Activated CD8-positive, alpha-beta T cell treated with anti-CD3 and anti-CD28 coated beads for 36 hours (primary cell): ENCODE measurements at regions of chr17 and their contacts with region 1.

Region 1: GRCh38 chr17:9432134-9432885 is 143.3 kb downstream of the STX8 start:
- DNase-seq: no peak
- ATAC-seq: no peak
- H3K4me3 Mint-ChIP-seq: no peak overlapping the region
- H3K27ac Mint-ChIP-seq: no peak overlapping the region
- H3K4me1 Mint-ChIP-seq: peaks cover 12% of the 10 kb centered on the region
- H3K27me3 Mint-ChIP-seq: no peaks in the 10 kb centered on the region
- CTCF ChIP-seq: no peak

Region 2: GRCh38 chr17:9498490-9498889 is 66.2 kb after region 1 on chr17:
- CTCF ChIA-PET with region 1: no interaction called
- POLR2A ChIA-PET with region 1: no interaction called
- intact Hi-C with region 1: loop called (anchors 10 kb)
- DNase-seq: no peak
- ATAC-seq: no peak
- H3K4me3 Mint-ChIP-seq: no peak overlapping the region
- H3K27ac Mint-ChIP-seq: no peak overlapping the region
- H3K4me1 Mint-ChIP-seq: no peaks in the 10 kb centered on the region
- H3K27me3 Mint-ChIP-seq: no peaks in the 10 kb centered on the region
- CTCF ChIP-seq: no peak

Region 3: DNA sequence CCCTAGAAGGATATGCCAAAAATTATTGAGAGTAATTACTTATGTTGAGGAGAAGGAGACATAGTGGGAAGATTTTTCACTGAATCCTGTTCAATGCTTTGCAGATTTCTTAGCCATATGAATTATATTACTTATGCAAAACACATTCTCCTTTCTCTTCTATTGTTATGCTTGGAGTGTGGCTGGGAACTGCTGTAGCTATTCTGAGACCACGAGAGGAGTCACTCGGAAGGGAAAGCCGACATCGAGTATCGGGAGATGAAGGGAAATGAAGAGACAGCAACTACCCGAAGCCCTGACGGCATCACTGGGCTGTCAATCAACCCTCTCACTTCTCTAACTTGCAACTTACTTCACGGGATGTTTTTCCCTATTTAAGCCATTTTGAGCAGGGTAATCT is 103.8 kb after region 1 on chr17:
- CTCF ChIA-PET with region 1: no interaction called
- POLR2A ChIA-PET with region 1: no interaction called
- intact Hi-C with region 1: no loop called
- DNase-seq: no peak
- ATAC-seq: no peak
- H3K4me3 Mint-ChIP-seq: no peak overlapping the region
- H3K27ac Mint-ChIP-seq: no peak overlapping the region
- H3K4me1 Mint-ChIP-seq: no peaks in the 10 kb centered on the region
- H3K27me3 Mint-ChIP-seq: no peaks in the 10 kb centered on the region
- CTCF ChIP-seq: no peak